ENCODE measurements at regions of chr3 and their contacts with region 1.

Region 1: GRCh38 chr3:17979252-17979651 is 236.8 kb upstream of the TBC1D5 start:
- DNase-seq: no peak
- H3K4me3 ChIP-seq: no peak overlapping the region
- H3K27ac ChIP-seq: no peak overlapping the region
- H3K4me1 ChIP-seq: no peaks in the 10 kb centered on the region
- H3K27me3 ChIP-seq: no peaks in the 10 kb centered on the region
- CTCF ChIP-seq: peak in 1 of 2 donors; percentile 31

Region 2: DNA sequence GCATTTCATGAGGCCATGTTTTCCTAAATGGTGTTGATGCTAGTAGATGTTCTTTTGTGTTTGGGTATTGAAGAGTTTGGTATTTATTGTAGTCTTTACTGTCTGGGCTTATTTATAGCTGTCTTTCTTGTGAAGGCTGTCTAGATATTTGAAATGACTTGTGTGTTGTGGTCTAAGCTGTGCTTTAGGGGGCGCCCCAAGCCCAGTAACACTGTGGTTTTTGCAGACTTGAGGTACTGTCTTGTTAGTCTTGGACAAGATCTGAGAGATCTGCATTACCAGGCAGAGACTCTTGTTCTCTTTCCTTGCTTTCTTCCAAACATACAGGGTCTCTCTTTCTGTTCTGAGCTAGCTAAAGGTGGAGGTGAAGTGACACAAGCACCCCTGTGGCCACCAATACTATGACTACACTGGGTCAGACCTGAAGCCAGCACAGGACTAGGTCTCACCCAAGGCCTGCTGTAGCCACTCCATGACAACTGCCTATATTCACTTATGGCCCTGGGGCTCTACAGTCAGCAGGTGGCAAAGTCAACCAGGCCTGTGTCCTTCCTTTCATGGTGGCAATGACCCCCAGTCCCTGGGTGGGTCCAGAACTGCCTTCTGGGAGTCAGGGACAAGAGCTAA is 84.7 kb before region 1 on chr3:
- CTCF ChIA-PET with region 1: interaction called, 3 read pairs
- dilution Hi-C with region 1: no loop called
- in situ Hi-C with region 1: no loop called
- intact Hi-C with region 1: loop called (anchors 1 kb)
- DNase-seq: peak; percentile 47
- H3K4me3 ChIP-seq: no peak overlapping the region
- H3K27ac ChIP-seq: no peak overlapping the region
- H3K4me1 ChIP-seq: no peaks in the 10 kb centered on the region
- H3K27me3 ChIP-seq: no peaks in the 10 kb centered on the region
- CTCF ChIP-seq: peak; percentile 50 to 72

Region 3: DNA sequence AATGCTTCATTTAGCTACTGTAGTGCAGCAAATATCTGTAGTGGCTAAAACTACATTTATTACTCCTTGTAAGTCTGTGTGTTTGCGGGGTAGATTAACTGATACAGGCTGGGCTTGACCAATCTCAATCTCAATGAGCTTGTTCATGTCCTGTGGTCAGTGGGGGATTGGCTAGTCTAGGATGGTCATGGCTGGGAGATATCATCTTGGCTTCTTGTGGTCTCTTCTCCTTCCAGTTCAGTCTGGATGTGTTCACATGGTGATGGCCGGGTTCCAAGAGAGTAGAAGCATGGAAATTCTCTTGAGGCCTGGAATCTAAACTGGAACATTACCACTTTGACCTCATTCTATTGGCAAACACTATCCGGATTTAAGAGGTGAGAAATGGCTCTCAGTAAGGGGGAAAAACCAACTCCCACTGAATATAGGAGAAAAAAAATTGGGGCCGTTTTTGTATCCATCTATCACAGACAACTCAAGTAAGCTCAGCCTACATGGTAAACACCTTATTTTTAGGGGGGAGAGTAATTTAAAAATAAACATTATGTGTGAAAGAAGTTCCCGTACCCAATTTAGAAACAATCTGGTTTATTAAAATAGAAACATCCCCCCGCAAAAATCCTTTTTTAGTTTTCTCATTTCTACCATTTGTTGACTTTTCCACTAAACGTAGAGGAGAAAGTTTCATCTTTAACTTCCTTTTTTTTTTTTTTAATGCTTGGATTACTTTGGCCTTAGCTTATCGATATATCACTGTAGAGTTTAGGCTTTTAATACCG is 48.1 kb after region 1 on chr3:
- CTCF ChIA-PET with region 1: interaction called, 11 read pairs
- dilution Hi-C with region 1: no loop called
- in situ Hi-C with region 1: no loop called
- intact Hi-C with region 1: no loop called
- DNase-seq: peak; percentile 62
- H3K4me3 ChIP-seq: no peak overlapping the region
- H3K27ac ChIP-seq: no peak overlapping the region
- H3K4me1 ChIP-seq: no peaks in the 10 kb centered on the region
- H3K27me3 ChIP-seq: no peaks in the 10 kb centered on the region
- CTCF ChIP-seq: no peak

Region 4: GRCh38 chr3:18071833-18072232 is 92.6 kb after region 1 on chr3:
- CTCF ChIA-PET with region 1: no interaction called
- dilution Hi-C with region 1: no loop called
- in situ Hi-C with region 1: no loop called
- intact Hi-C with region 1: no loop called
- DNase-seq: peak; percentile 9
- H3K4me3 ChIP-seq: no peak overlapping the region
- H3K27ac ChIP-seq: no peak overlapping the region
- H3K4me1 ChIP-seq: peaks cover 12% of the 10 kb centered on the region
- H3K27me3 ChIP-seq: no peaks in the 10 kb centered on the region
- CTCF ChIP-seq: no peak

Region 5: GRCh38 chr3:18389108-18389733 is 410.0 kb after region 1 on chr3:
- CTCF ChIA-PET with region 1: interaction called, 3 read pairs
- dilution Hi-C with region 1: no loop called
- in situ Hi-C with region 1: no loop called
- intact Hi-C with region 1: loop called (anchors 10 kb)
- DNase-seq: peak; percentile 8
- H3K4me3 ChIP-seq: no peak overlapping the region
- H3K27ac ChIP-seq: no peak overlapping the region
- H3K4me1 ChIP-seq: no peaks in the 10 kb centered on the region
- H3K27me3 ChIP-seq: no peaks in the 10 kb centered on the region
- CTCF ChIP-seq: peak; percentile 26 to 61

Measured in mammary epithelial cell (primary cell).